ENCODE measurements at regions of chr2 and their contacts with region 1.

Region 1: DNA sequence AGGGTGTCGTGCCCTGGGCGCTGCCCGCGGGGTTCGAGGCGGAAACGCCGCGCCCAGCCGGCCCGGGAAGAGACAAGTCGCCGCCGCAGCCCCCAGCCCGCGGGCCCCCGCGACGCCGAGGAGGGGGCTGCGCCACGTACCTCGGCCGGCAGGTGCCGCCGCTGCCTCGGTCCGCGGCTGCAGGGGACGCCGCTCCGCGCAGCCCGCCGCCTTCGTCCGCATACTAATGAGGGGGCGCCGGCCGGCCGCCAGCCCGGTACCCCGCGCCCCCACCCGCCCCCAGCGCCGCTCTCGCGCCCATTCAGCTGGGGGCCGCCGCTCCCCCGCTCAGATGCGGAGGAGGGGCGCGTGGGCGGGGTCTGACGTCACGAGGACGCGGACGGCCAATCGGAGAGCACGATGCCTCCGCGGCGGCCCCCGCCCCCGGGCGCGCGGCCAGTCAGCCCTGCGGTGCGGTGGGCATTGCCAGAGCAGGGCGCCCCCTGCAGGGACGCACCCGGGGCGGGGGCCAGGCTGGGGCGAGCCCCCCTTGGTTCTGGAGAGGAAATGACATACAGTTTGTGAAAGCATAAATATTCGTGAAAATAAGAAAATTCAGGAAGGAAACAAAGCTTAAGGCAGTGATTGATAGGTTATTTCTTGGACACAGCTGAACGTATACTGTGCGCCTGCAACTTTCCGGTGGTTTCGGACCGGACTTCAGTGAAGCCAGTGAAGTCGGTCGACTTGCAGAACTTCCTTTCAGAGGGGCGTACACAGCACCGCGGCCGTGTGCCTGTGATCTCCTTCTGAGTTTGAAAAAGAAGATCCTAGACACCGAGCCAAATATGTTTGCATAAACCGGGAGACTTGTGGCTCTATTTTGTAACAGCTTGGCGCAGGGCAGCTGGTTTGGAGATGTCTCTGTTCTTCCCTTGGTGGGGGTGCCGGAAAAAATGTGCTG is at the start of gene ST3GAL5:
- DNase-seq: peak; percentile 88 to 99 (median 96)

Region 2: GRCh38 chr2:85148182-85148581 is 740.8 kb before region 1 on chr2:
- intact Hi-C with region 1: no loop called
- DNase-seq: no peak

Region 3: GRCh38 chr2:85741833-85742455 is 147.0 kb before region 1 on chr2:
- intact Hi-C with region 1: loop called (anchors 5 kb)
- DNase-seq: peak; percentile 55 to 92 (median 80)

Region 4: DNA sequence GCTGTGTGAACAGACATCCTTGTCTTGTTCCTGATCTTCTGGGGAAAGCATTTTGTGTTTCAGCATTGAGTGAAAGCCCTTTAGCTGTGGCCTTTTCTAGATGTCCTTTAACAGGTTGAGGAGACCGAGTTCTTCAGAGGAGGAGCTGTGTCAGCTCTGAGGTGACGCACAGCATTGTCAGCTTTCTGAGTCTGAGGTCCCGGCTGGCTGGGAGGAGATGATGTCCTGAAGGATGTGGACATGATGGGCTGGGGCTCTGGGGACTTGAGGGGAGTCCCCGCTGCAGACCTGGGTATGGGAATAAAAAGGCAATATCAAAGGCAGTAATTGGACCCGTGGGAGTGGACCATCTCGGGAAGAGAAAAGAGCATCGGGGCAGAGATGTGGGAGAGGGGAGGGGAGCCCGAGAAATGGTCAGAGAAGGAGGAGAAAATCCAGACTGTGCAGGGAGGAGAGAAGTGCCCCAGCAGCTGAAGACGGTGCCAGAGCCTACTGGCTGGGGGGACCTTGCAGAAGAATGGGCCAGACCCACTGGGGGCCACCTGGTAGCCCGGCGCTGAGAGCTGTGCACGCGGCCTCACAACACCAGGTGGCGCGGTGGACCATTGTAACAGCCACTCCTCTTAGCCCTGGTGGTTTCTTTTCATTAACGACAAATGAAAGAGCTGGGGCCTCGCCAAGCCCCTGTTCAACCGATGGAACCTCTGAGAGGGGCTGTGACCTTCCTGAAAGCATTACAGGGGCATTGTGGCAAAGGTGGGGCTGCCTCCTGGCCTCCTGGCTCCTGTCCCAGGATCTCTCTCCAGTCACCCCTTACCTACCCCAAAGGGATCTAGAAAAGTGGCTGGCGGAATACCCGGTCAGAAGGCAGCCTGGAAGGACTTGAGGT is 61.7 kb before region 1 on chr2:
- intact Hi-C with region 1: loop called (anchors 5 kb)
- DNase-seq: peak; percentile 66 to 94 (median 84)

Region 5: DNA sequence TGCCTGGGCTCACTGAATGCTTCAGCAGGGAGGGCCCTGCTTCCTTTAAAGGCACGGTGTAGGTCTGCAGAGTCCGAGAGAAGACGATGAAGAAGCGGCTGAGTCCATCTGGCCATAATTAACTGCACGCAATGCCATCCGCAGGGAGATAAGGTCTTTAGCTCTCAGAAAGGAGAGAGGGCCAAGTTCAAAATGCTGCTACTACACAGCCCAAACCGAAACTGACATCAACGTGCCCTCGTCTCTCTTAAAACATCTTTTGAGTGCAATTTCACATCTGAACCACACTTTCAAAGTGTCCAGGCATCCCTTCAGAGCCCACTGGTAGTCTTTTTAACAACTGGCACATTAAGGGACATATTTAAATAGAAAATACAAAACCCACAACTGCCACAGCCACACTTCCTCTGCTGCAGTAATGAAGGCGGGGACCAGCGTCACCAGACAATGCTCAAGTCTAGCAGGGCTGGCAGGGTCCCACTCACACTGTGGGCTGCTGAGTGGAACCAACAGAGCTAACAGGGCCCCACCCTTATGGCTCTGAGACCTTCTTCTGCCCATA is 35.9 kb before region 1 on chr2:
- intact Hi-C with region 1: loop called (anchors 5 kb)
- DNase-seq: peak in 14 of 42 donors; percentile 22 to 70 (median 37)

Region 6: GRCh38 chr2:86035883-86036668 is 147.1 kb after region 1 on chr2:
- intact Hi-C with region 1: loop called (anchors 5 kb)
- DNase-seq: peak; percentile 43 to 85 (median 68)

Region 7: GRCh38 chr2:86079981-86080911 is 191.3 kb after region 1 on chr2:
- intact Hi-C with region 1: loop called (anchors 2 kb)
- DNase-seq: peak; percentile 43 to 92 (median 82)

Region 8: DNA sequence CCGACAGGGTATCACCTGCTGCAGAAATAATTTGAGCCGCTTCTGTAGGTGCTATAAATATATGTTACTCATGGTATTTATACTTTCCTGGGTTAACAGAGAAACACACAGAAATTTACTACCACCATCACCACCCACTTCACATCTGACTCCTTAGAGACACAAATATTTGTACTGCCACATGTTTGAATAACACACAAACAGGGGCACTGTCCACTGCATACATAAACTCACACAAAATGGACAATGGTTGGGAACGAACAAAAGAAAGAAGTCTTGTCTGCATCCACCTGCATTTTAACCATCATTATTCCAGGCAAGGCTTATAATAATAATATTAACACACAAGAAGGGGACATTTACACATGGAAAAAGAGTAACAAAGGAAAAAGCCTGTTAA is 282.3 kb after region 1 on chr2:
- intact Hi-C with region 1: no loop called
- DNase-seq: no peak